CD4-positive, alpha-beta memory T cell (primary cell): ENCODE measurements at regions of chr18 and their contacts with region 1.

Region 1: GRCh38 chr18:77132371-77133050 is at the start of gene MBP:
- DNase-seq: peak; percentile 58 to 75 (median 70)
- H3K4me3 ChIP-seq: peak within 1 kb of the TSS; percentile 81 to 82
- H3K4me3 Mint-ChIP-seq: peak within 1 kb of the TSS; percentile 98 to 100 (median 98)
- H3K27ac ChIP-seq: peak within 1 kb of the TSS; percentile 85
- H3K27ac Mint-ChIP-seq: peak within 1 kb of the TSS; percentile 94 to 99 (median 97)
- H3K4me1 ChIP-seq: peaks cover 54% of the 10 kb centered on the region
- H3K4me1 Mint-ChIP-seq: peaks cover 38 to 66% (median 50%) of the 10 kb centered on the region in 4 donors
- H3K27me3 ChIP-seq: no peaks in the 10 kb centered on the region
- H3K27me3 Mint-ChIP-seq: no peaks in the 10 kb centered on the region
- total RNA-seq, gene MBP: 179 to 187 TPM

Region 2: GRCh38 chr18:77061946-77062517 is 70.5 kb before region 1 on chr18:
- CTCF ChIA-PET with region 1: interaction called, 28 read pairs
- POLR2A ChIA-PET with region 1: interaction called, 178 read pairs
- intact Hi-C with region 1: loop called (anchors 1 kb)
- DNase-seq: peak in 1 of 5 donors; percentile 62
- H3K4me3 ChIP-seq: peak overlapping the region in 1 of 2 donors; percentile 8
- H3K4me3 Mint-ChIP-seq: peak overlapping the region; percentile 61 to 92 (median 81)
- H3K27ac ChIP-seq: peak overlapping the region; percentile 77
- H3K27ac Mint-ChIP-seq: peak overlapping the region; percentile 97 to 100 (median 99)
- H3K4me1 ChIP-seq: peaks cover 95% of the 10 kb centered on the region
- H3K4me1 Mint-ChIP-seq: peaks cover 72 to 89% (median 82%) of the 10 kb centered on the region in 4 donors
- H3K27me3 ChIP-seq: no peaks in the 10 kb centered on the region
- H3K27me3 Mint-ChIP-seq: no peaks in the 10 kb centered on the region

Region 3: GRCh38 chr18:77101410-77102258 is 30.9 kb before region 1 on chr18:
- CTCF ChIA-PET with region 1: interaction called, 19 read pairs
- POLR2A ChIA-PET with region 1: interaction called, 126 read pairs
- intact Hi-C with region 1: loop called (anchors 1 kb)
- DNase-seq: peak in 2 of 5 donors; percentile 27 to 66
- H3K4me3 ChIP-seq: peak overlapping the region; percentile 31 to 39
- H3K4me3 Mint-ChIP-seq: peak overlapping the region; percentile 78 to 89 (median 83)
- H3K27ac ChIP-seq: peak overlapping the region; percentile 81
- H3K27ac Mint-ChIP-seq: peak overlapping the region; percentile 97 to 98 (median 98)
- H3K4me1 ChIP-seq: peaks cover 99% of the 10 kb centered on the region
- H3K4me1 Mint-ChIP-seq: peaks cover 79 to 99% (median 90%) of the 10 kb centered on the region in 4 donors
- H3K27me3 ChIP-seq: no peaks in the 10 kb centered on the region
- H3K27me3 Mint-ChIP-seq: no peaks in the 10 kb centered on the region

Region 4: GRCh38 chr18:77147418-77147852 is 14.9 kb after region 1 on chr18:
- CTCF ChIA-PET with region 1: interaction called, 6 read pairs
- POLR2A ChIA-PET with region 1: interaction called, 28 read pairs
- intact Hi-C with region 1: no loop called
- DNase-seq: no peak
- H3K4me3 ChIP-seq: no peak overlapping the region
- H3K4me3 Mint-ChIP-seq: peak overlapping the region in 3 of 8 donors; percentile 8 to 65 (median 50)
- H3K27ac ChIP-seq: no peak overlapping the region
- H3K27ac Mint-ChIP-seq: peak overlapping the region; percentile 0 to 79 (median 70)
- H3K4me1 ChIP-seq: peaks cover 23% of the 10 kb centered on the region
- H3K4me1 Mint-ChIP-seq: peaks cover 24 to 53% (median 41%) of the 10 kb centered on the region in 4 donors
- H3K27me3 ChIP-seq: no peaks in the 10 kb centered on the region
- H3K27me3 Mint-ChIP-seq: no peaks in the 10 kb centered on the region